AG04450 (cell line): ENCODE measurements at regions of chr5 and their contacts with region 1.

Region 1: DNA sequence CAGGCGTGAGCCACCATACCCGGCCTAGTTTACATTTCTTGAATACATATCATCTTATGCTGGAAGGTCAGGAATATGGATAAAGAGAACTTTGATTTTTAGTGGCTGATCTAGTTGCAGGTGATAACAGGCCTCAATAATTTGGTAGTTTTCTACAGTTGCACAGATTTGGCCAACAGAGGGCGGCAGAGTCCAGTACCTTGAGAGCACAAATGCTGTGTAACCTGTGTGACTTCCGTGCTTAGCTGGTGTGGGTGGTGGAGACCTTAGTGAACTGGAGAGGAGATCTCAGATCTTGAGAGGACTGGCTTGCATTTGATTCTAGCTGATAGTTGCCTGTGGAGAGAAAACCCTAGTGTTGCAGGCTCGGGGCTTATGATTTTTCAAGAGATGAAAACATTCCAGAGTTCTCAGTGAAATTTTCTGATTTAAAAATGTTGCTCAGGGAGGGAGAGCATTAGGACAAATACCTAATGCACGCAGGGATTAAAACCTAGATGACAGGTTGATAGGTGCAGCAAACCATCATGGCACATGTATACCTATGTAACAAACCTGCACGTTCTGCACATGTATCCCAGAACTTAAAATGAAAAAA is 17.4 kb upstream of the GPR151 start:
- DNase-seq: peak; percentile 7
- H3K4me3 ChIP-seq: no peak overlapping the region
- H3K27ac ChIP-seq: no peak overlapping the region
- H3K27me3 ChIP-seq: no peaks in the 10 kb centered on the region
- CTCF ChIP-seq: peak; percentile 91

Region 2: DNA sequence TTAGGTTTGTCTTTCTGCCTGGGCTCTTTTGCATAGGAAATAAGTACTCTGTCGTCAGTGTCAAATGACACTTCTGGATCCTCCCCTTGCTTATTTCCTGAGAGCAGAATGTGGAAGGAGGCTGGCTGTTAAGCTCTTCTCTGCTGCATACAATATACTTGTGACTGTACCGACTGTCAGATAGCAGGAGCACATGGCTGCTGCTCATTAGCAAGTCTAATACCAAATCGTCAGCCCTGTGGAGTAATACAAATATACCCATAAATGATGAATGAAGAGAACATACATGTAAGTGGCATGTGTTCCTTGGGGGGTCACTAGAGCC is 17.2 kb before region 1 on chr5 and contains the start of gene GPR151:
- CTCF ChIA-PET with region 1: interaction called, 21 read pairs
- POLR2A ChIA-PET with region 1: no interaction called
- DNase-seq: no peak
- H3K4me3 ChIP-seq: no peak within 1 kb of the TSS
- H3K27ac ChIP-seq: no peak within 1 kb of the TSS
- H3K27me3 ChIP-seq: no peaks in the 10 kb centered on the region
- CTCF ChIP-seq: no peak
- polyA plus RNA-seq, gene GPR151: not detected in 2 replicates

Region 3: GRCh38 chr5:146548781-146549449 is 15.6 kb after region 1 on chr5:
- CTCF ChIA-PET with region 1: interaction called, 14 read pairs
- POLR2A ChIA-PET with region 1: no interaction called
- DNase-seq: no peak
- H3K4me3 ChIP-seq: no peak overlapping the region
- H3K27ac ChIP-seq: no peak overlapping the region
- H3K27me3 ChIP-seq: no peaks in the 10 kb centered on the region
- CTCF ChIP-seq: no peak

Region 4: DNA sequence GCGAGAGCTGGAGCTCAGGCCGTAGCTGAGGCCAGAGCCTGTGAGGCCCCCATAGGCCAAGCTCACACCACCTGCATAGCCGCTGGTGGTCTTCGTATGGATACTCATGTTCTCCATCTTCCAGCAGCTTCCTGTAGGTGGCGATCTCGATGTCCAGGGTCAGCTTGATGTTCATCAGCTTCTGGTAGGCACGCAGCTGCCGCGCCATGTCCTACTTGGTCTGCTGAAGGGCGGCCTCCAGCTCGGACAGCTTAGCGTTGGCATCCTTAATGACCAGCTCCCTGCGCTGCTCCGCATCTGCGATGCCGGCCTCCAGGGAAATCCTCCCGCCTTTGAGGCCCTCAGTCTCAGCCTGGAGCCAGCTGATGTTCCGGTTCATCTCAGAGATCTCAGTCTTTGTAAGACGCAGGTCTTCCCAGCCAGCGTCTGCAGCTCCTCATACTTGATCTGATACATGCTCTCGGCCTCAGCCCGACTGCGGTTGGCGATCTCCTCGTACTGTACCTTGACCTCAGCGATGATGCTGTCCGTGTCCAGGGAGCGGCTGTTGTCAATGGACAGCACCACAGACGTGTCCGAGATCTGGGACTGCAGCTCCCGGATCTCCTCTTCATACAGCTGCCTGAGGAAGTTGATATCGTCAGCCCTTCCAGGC is 173.1 kb after region 1 on chr5:
- CTCF ChIA-PET with region 1: no interaction called
- POLR2A ChIA-PET with region 1: no interaction called
- DNase-seq: no peak
- H3K4me3 ChIP-seq: no peak overlapping the region
- H3K27ac ChIP-seq: no peak overlapping the region
- H3K27me3 ChIP-seq: no peaks in the 10 kb centered on the region
- CTCF ChIP-seq: no peak

Region 5: GRCh38 chr5:146965761-146966659 is 432.7 kb after region 1 on chr5:
- CTCF ChIA-PET with region 1: interaction called, 140 read pairs
- POLR2A ChIA-PET with region 1: no interaction called
- DNase-seq: peak; percentile 33
- H3K4me3 ChIP-seq: no peak overlapping the region
- H3K27ac ChIP-seq: no peak overlapping the region
- H3K27me3 ChIP-seq: no peaks in the 10 kb centered on the region
- CTCF ChIP-seq: peak; percentile 74

Region 6: DNA sequence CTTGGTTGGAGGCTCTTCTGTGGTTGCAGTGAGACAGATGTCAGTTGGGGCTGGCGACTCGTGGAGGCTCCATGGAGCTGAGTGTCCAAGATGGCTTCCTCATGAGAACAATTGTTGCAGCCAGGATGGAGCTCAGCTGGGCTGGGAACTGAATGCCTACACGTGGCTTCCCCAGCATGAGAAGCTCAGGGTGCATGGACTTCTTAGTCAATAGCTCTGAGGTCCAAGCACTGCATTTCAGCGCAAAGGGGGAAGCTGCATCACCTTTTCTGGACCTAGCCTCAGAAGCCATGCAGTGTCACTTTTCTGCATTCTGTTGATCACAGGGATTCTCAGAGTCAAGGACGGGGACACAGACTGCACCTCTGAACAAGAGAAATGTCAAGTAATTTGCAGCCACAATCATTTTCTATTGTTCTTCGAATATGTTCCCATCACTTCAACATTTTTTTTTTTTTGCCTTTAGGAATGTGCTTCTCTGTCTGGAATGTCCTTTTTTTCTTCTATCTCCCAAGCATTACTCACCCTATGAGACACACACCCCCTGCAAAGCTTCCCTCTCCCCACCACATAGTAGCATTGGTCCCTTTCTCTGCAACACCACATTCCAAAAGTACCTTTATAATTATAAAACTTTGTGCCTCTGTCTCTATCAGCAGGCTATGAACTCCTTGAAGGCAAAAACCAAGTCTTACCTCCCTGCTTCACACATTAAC is 643.9 kb after region 1 on chr5:
- CTCF ChIA-PET with region 1: interaction called, 12 read pairs
- POLR2A ChIA-PET with region 1: no interaction called
- DNase-seq: no peak
- H3K4me3 ChIP-seq: no peak overlapping the region
- H3K27ac ChIP-seq: no peak overlapping the region
- H3K27me3 ChIP-seq: no peaks in the 10 kb centered on the region
- CTCF ChIP-seq: no peak